Activated B cell treated with CpG ODN at 0.5 μM for 24 hours (primary cell): ENCODE measurements at regions of chr5 and their contacts with region 1.

Region 1: GRCh38 chr5:55172051-55172899 is 702 bp downstream of the CDC20B start:
- DNase-seq: no peak
- ATAC-seq: peak; percentile 53
- H3K4me3 Mint-ChIP-seq: peak overlapping the region; percentile 88
- H3K27ac Mint-ChIP-seq: no peak overlapping the region
- H3K4me1 Mint-ChIP-seq: peaks cover 33% of the 10 kb centered on the region
- H3K27me3 Mint-ChIP-seq: peaks cover 51% of the 10 kb centered on the region
- CTCF ChIP-seq: peak; percentile 88

Region 2: GRCh38 chr5:53749621-53750020 is 1422.7 kb before region 1 on chr5:
- CTCF ChIA-PET with region 1: no interaction called
- POLR2A ChIA-PET with region 1: no interaction called
- intact Hi-C with region 1: no loop called
- DNase-seq: no peak
- ATAC-seq: no peak
- H3K4me3 Mint-ChIP-seq: no peak overlapping the region
- H3K27ac Mint-ChIP-seq: no peak overlapping the region
- H3K4me1 Mint-ChIP-seq: no peaks in the 10 kb centered on the region
- H3K27me3 Mint-ChIP-seq: no peaks in the 10 kb centered on the region
- CTCF ChIP-seq: no peak

Region 3: DNA sequence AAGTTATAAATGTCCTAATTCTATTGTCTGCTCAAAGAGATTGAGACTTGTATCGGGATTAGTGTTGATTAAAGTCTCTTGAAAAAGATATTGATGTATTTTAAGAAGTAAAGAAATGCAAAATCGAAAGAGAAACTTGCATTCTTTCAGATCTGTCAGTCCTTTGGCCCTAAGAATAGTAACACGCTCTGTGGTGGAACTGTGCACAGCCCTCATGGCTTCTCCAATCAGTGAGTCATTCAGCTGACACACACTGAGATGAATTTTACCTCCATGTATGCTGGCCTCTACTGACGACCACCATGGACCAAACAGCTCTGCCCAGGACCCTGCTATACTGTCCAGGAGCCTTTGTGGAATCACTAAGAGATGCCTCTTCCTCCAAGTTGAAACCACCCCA is 419.2 kb before region 1 on chr5:
- CTCF ChIA-PET with region 1: no interaction called
- POLR2A ChIA-PET with region 1: no interaction called
- intact Hi-C with region 1: no loop called
- DNase-seq: no peak
- ATAC-seq: peak; percentile 90
- H3K4me3 Mint-ChIP-seq: peak overlapping the region; percentile 72
- H3K27ac Mint-ChIP-seq: peak overlapping the region; percentile 81
- H3K4me1 Mint-ChIP-seq: peaks cover 60% of the 10 kb centered on the region
- H3K27me3 Mint-ChIP-seq: no peaks in the 10 kb centered on the region
- CTCF ChIP-seq: no peak

Region 4: GRCh38 chr5:55052383-55052931 is 119.8 kb before region 1 on chr5:
- CTCF ChIA-PET with region 1: no interaction called
- POLR2A ChIA-PET with region 1: no interaction called
- intact Hi-C with region 1: no loop called
- DNase-seq: no peak
- ATAC-seq: no peak
- H3K4me3 Mint-ChIP-seq: no peak overlapping the region
- H3K27ac Mint-ChIP-seq: no peak overlapping the region
- H3K4me1 Mint-ChIP-seq: no peaks in the 10 kb centered on the region
- H3K27me3 Mint-ChIP-seq: no peaks in the 10 kb centered on the region
- CTCF ChIP-seq: no peak

Region 5: DNA sequence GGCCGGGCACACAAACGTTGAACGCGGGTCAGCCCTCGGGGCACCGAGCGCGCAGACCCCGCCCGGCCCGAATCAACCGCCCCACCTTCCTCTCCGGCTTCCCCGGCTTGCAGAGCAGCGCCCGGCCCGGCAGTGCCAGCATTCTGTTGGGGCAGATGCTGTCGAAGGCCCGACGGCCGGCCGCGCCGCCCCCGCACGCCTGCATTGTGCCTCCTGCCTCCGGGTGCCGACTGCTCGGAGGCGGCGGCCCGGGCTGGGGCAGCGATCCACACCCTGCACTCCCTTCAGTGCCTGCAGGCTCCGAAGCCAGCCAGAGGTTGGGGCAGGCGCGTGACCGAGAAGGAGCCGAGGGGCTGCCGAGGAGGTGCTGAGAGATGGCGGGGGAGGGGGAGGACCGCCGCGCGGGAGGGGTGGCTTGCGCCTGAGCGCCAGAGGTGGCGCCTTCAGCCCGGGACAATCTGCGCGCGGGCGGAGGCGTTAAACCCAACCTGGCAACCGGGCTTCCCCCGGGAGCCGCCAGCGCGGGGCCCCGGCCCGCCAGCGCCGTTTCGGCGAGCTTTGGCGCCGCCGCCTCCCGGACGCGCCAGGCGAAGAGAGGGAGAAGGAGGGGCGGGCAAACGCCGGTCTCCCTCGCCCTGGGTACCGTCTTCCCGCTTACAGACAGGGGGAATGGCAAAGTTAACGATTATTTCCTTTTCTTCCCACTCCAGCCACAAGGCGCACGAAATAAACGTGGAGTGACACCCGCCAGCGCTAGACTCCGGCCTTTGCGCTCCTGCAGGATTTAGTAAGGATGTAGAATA is 54.9 kb after region 1 on chr5 and contains the start of gene MCIDAS:
- CTCF ChIA-PET with region 1: interaction called, 4 read pairs
- POLR2A ChIA-PET with region 1: no interaction called
- intact Hi-C with region 1: loop called (anchors 1 kb)
- DNase-seq: peak; percentile 51
- ATAC-seq: peak; percentile 60
- H3K4me3 Mint-ChIP-seq: peak within 1 kb of the TSS; percentile 72
- H3K27ac Mint-ChIP-seq: no peak within 1 kb of the TSS
- H3K4me1 Mint-ChIP-seq: peaks cover 49% of the 10 kb centered on the region
- H3K27me3 Mint-ChIP-seq: peaks cover 79% of the 10 kb centered on the region
- CTCF ChIP-seq: no peak
- total RNA-seq, gene MCIDAS: not detected in 2 replicates

Region 6: DNA sequence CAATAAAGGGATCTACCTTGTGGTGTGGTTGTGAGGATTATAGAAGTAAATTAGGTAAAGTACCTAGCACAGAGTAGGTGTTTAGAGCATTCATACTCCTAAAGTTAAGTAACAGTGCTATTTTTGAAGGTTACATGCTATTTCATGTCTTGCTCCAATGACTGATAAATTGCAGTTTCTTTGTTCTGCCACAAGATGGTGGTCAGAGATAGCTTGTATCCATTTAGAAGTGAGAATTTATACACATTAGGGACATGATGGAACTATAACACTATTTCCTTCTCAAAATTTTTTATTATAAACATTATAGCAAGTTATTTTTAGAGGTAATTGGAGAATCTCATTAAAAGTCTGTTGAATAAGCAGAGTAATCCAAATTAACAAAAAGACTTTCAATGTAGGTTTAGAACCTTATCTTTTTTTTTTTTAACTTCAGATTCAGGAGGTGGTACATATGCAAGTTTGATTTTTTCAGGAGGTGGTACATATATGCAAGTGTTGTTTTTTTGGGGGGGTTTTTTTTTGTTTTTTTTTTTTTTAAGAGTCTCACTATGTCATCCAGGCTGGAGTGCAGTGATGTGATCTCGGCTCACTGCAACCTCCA is 152.6 kb after region 1 on chr5:
- CTCF ChIA-PET with region 1: no interaction called
- POLR2A ChIA-PET with region 1: no interaction called
- intact Hi-C with region 1: loop called (anchors 5 kb)
- DNase-seq: no peak
- ATAC-seq: peak; percentile 56
- H3K4me3 Mint-ChIP-seq: no peak overlapping the region
- H3K27ac Mint-ChIP-seq: no peak overlapping the region
- H3K4me1 Mint-ChIP-seq: peaks cover 6% of the 10 kb centered on the region
- H3K27me3 Mint-ChIP-seq: no peaks in the 10 kb centered on the region
- CTCF ChIP-seq: no peak

Region 7: GRCh38 chr5:55407059-55407684 is 234.9 kb after region 1 on chr5:
- CTCF ChIA-PET with region 1: no interaction called
- POLR2A ChIA-PET with region 1: no interaction called
- intact Hi-C with region 1: loop called (anchors 5 kb)
- DNase-seq: no peak
- ATAC-seq: peak; percentile 37
- H3K4me3 Mint-ChIP-seq: no peak overlapping the region
- H3K27ac Mint-ChIP-seq: no peak overlapping the region
- H3K4me1 Mint-ChIP-seq: peaks cover 2% of the 10 kb centered on the region
- H3K27me3 Mint-ChIP-seq: no peaks in the 10 kb centered on the region
- CTCF ChIP-seq: no peak

Region 8: DNA sequence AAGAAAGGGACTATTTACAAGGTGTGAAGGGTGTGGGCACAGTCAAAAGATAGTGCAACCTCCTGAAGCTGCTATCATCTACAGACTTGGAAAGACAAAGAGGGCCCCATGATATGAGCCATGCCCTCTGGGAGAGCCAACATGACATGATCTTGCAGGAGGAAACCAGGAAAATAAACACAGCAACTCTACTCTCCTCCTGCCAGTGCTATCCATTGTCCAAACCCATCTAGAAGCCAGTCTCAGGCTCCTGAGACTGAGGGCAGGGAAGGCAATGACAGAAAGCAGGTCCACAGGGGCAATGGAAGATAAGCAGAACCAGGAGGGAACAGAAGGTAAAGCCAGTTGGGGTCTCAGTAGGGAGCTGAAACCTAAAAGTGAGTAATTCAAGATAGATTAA is 325.4 kb after region 1 on chr5:
- CTCF ChIA-PET with region 1: no interaction called
- POLR2A ChIA-PET with region 1: no interaction called
- intact Hi-C with region 1: no loop called
- DNase-seq: no peak
- ATAC-seq: no peak
- H3K4me3 Mint-ChIP-seq: no peak overlapping the region
- H3K27ac Mint-ChIP-seq: no peak overlapping the region
- H3K4me1 Mint-ChIP-seq: peaks cover 10% of the 10 kb centered on the region
- H3K27me3 Mint-ChIP-seq: no peaks in the 10 kb centered on the region
- CTCF ChIP-seq: no peak

Region 9: DNA sequence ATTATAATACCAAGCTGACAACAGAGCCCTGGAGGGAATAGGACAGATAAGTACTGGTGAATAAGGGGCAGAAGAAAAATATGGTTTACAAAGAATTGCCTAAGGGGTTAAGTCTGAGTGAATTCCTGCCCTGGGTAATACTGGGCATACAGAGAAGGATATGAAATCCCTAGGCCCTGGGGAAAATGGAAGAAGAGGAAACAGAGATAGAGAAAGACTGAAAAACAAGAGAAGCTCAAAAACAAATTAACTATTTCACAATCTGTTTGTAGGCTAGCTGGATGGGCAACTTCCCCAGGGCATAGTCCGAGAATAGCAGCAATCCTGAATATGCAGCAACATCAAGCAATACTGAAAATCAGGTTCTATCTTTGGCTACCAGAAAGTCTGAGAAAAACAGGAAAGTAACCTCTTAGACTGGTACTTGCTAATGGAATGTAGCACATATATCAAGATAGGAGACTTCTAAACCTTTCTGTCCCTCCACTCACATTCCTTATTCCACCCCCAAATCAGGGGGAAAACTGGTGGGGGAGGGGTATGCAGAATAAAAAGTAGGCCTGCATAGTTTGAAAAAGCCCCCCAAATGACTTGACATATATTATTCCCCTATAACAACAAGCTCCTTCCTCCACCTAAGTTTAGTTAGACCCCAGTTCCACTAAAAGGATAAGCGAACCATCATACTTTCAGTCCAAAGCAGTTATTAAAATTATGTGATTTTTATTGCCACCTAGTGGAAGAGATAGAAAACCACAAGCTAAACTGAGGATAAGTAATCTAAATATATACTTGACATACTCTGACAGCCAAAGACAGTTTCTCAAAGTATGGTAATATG is 519.2 kb after region 1 on chr5:
- CTCF ChIA-PET with region 1: interaction called, 18 read pairs
- POLR2A ChIA-PET with region 1: no interaction called
- intact Hi-C with region 1: loop called (anchors 1 kb)
- DNase-seq: no peak
- ATAC-seq: peak; percentile 58
- H3K4me3 Mint-ChIP-seq: no peak overlapping the region
- H3K27ac Mint-ChIP-seq: no peak overlapping the region
- H3K4me1 Mint-ChIP-seq: peaks cover 5% of the 10 kb centered on the region
- H3K27me3 Mint-ChIP-seq: no peaks in the 10 kb centered on the region
- CTCF ChIP-seq: peak; percentile 26

Region 10: DNA sequence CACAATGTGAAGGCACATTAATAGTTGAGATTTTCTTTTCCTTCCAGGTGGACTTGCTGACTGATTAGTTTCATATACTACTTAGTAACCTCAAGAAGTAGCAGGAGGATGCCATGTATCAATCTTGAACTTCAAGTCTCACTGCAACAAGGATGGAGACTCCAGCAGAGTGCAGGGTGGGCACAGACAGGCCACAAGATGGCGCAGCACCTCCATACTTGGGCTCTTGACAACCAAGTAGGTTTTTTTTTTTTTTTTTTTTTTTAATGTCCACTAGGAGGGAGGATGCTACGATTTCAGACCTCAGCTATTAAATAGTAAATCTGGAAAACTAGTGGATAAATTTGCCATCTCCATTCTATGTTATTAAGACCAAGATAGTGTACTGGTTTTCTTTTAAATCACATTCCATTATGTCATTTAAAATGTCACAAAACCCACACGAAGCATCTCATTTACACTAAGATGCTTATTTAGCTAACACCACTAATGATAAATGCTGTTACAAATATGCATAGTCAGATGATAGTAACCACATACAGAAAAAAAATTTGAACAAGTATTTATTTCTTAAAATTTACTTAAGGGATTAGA is 763.9 kb after region 1 on chr5:
- CTCF ChIA-PET with region 1: no interaction called
- POLR2A ChIA-PET with region 1: no interaction called
- intact Hi-C with region 1: loop called (anchors 1 kb)
- DNase-seq: peak; percentile 56
- ATAC-seq: peak; percentile 93
- H3K4me3 Mint-ChIP-seq: no peak overlapping the region
- H3K27ac Mint-ChIP-seq: no peak overlapping the region
- H3K4me1 Mint-ChIP-seq: no peaks in the 10 kb centered on the region
- H3K27me3 Mint-ChIP-seq: no peaks in the 10 kb centered on the region
- CTCF ChIP-seq: peak; percentile 48

Region 11: GRCh38 chr5:56200856-56201666 is 1028.8 kb after region 1 on chr5:
- CTCF ChIA-PET with region 1: no interaction called
- POLR2A ChIA-PET with region 1: no interaction called
- intact Hi-C with region 1: loop called (anchors 1 kb)
- DNase-seq: no peak
- ATAC-seq: peak; percentile 100
- H3K4me3 Mint-ChIP-seq: no peak overlapping the region
- H3K27ac Mint-ChIP-seq: no peak overlapping the region
- H3K4me1 Mint-ChIP-seq: peaks cover 4% of the 10 kb centered on the region
- H3K27me3 Mint-ChIP-seq: no peaks in the 10 kb centered on the region
- CTCF ChIP-seq: no peak